Sigmoid colon (tissue), 7 donors: ENCODE measurements at regions of chr4 and their contacts with region 1.

Region 1: GRCh38 chr4:122783301-122784215 is 43.1 kb upstream of the FGF2 start:
- DNase-seq: peak; percentile 77
- H3K4me3 ChIP-seq: peak overlapping the region in 1 of 4 donors; percentile 5
- H3K27ac ChIP-seq: peak overlapping the region; percentile 48 to 75 (median 70)
- H3K4me1 ChIP-seq: peaks cover 0 to 19% (median 18%) of the 10 kb centered on the region in 4 donors
- H3K27me3 ChIP-seq: no peaks in the 10 kb centered on the region
- CTCF ChIP-seq: no peak
- EP300 ChIP-seq: no peak
- POLR2A ChIP-seq: peak in 1 of 2 donors; percentile 11

Region 2: DNA sequence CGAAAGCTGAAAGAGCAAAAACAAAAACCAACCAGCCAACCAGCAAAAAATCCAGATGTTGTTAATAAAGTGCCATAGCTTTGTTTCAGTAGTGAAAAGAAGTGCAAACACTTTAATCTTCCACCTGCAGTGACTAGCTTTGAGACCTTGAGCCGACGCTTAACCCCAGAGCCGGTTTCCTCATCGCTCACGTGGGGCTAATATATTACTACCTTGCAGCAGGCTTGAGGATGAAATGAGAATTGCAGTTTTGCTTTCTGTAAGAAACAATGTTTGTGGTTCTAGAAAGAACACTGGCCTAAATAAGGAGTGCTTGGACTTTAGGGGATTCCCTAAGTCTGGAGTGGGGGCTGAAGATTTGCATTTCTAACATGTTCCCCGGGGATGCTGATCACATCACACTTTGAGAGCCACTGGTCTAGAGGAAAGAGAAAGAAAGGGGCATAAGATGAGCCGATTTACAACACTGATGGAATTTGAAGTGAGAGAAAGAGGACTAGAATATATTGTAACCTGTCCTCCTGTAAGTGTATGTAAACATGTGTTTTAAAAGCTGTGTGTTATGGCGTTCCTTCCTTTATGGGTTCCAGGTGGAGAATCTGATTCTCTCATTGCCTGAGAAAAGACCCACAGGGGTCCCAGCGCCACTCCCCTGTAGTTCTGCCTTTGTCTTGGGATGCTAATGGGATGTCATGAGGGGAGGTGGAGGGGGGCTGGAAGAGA is 44.5 kb after region 1 on chr4:
- intact Hi-C with region 1: loop called (anchors 1 kb)
- DNase-seq: peak; percentile 82
- H3K4me3 ChIP-seq: peak overlapping the region; percentile 78 to 88 (median 85)
- H3K27ac ChIP-seq: peak overlapping the region; percentile 93 to 95 (median 94)
- H3K4me1 ChIP-seq: peaks cover 0 to 58% (median 52%) of the 10 kb centered on the region in 4 donors
- H3K27me3 ChIP-seq: no peaks in the 10 kb centered on the region
- CTCF ChIP-seq: peak; percentile 33 to 69 (median 38)
- EP300 ChIP-seq: no peak
- POLR2A ChIP-seq: peak in 1 of 2 donors; percentile 25